Transverse colon (tissue), 4 donors: ENCODE measurements at regions of chr1 and their contacts with region 1.

Region 1: GRCh38 chr1:110967256-110967655 is 3.5 kb upstream of the LRIF1 start:
- DNase-seq: no peak
- H3K4me3 ChIP-seq: no peak overlapping the region
- H3K27ac ChIP-seq: no peak overlapping the region
- H3K4me1 ChIP-seq: peaks cover 0 to 14% (median 3%) of the 10 kb centered on the region in 4 donors
- H3K27me3 ChIP-seq: peaks cover 53% of the 10 kb centered on the region
- CTCF ChIP-seq: no peak
- EP300 ChIP-seq: no peak
- POLR2A ChIP-seq: no peak

Region 2: DNA sequence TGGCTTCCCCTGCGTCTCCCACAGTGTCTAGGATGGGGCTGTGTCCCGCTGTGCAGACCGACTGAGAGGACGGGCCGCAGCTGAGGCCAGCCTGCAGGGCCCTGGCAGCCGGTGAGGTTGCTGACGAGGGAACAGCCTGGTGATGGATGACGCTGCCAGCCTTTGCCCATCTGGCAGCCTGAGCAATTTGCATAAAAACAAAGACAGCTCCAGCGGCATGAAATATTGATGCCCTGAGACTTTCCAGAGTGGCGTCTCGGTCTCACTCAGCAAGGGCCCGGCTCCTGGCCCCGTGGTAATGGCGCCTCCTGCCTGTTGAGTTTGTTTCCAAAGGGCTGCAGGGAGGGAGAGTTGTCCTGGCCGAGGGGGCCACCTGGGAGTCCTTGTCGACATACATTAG is 429.2 kb before region 1 on chr1:
- in situ Hi-C with region 1: no loop called
- intact Hi-C with region 1: no loop called
- DNase-seq: no peak
- H3K4me3 ChIP-seq: no peak overlapping the region
- H3K27ac ChIP-seq: no peak overlapping the region
- H3K4me1 ChIP-seq: no peaks in the 10 kb centered on the region
- H3K27me3 ChIP-seq: no peaks in the 10 kb centered on the region
- CTCF ChIP-seq: no peak
- EP300 ChIP-seq: no peak
- POLR2A ChIP-seq: no peak

Region 3: GRCh38 chr1:110686188-110686587 is 281.1 kb before region 1 on chr1:
- in situ Hi-C with region 1: no loop called
- intact Hi-C with region 1: no loop called
- DNase-seq: peak; percentile 21
- H3K4me3 ChIP-seq: no peak overlapping the region
- H3K27ac ChIP-seq: no peak overlapping the region
- H3K4me1 ChIP-seq: no peaks in the 10 kb centered on the region
- H3K27me3 ChIP-seq: peaks cover 12% of the 10 kb centered on the region
- CTCF ChIP-seq: no peak
- EP300 ChIP-seq: no peak
- POLR2A ChIP-seq: no peak

Region 4: DNA sequence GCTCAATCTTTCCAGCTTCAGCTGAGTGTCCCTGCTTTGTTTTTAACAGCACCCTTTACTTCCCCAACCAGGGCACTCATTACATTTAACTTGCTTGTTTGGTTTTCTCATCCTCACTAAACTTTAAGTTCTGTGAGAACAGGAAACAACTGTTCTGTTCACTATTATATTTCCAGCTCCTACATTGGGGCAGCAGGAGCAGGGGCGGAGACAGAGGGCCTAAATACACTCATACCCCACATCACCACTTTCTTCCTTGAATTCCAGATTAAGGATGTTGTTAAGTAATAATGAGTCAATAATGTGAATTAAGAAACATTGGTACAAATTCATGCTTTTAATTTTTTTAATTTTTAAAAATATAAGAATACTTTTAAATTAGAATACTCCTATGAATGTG is 166.6 kb after region 1 on chr1:
- in situ Hi-C with region 1: no loop called
- intact Hi-C with region 1: loop called (anchors 5 kb)
- DNase-seq: no peak
- H3K4me3 ChIP-seq: no peak overlapping the region
- H3K27ac ChIP-seq: peak overlapping the region in 1 of 4 donors; percentile 25
- H3K4me1 ChIP-seq: peaks cover 5 to 9% (median 7%) of the 10 kb centered on the region in 4 donors
- H3K27me3 ChIP-seq: no peaks in the 10 kb centered on the region
- CTCF ChIP-seq: no peak
- EP300 ChIP-seq: no peak
- POLR2A ChIP-seq: no peak